Naive thymus-derived CD8-positive, alpha-beta T cell (primary cell): ENCODE measurements at regions of chr17 and their contacts with region 1.

Region 1: DNA sequence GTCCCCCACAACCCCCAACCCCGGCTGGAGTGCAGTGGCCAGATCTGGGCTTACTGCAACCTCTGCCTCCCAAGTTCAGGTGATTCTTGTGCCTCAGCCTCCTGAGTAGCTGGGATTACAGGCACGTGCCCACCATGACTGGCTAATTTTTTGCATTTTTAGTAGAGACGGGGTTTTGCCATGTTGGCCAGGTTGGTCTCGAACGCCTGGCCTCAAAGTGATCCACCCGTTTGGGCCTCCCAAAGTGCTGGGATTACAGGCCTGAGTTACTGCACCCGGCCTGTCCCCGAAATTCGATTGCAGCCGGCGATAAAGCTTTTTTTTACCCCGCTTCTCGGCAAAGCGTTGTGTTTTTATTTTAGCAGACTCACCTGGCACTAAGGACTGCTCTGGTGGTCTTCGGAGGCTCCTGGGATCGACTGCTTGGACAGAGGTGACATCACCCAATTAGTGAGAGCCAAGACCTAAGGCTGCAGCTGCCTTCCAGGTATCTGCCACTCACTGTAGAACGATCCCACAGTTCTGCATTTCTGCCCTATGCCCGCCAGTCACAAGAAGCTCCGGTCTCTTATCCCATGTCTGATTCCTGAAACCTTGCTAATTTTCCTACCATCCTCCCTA is 82.2 kb upstream of the ARL4D start:
- DNase-seq: peak in 3 of 10 donors; percentile 8 to 36 (median 31)
- ATAC-seq: no peak
- H3K4me3 Mint-ChIP-seq: peak overlapping the region in 4 of 10 donors; percentile 7 to 64 (median 51)
- H3K27ac Mint-ChIP-seq: peak overlapping the region in 8 of 10 donors; percentile 6 to 84 (median 58)
- H3K4me1 Mint-ChIP-seq: peaks cover 5 to 16% (median 13%) of the 10 kb centered on the region in 4 donors
- H3K27me3 Mint-ChIP-seq: no peaks in the 10 kb centered on the region

Region 2: GRCh38 chr17:43006639-43007551 is 309.7 kb before region 1 on chr17 and contains the start of gene IFI35:
- POLR2A ChIA-PET with region 1: interaction called, 15 read pairs
- DNase-seq: peak; percentile 66 to 91 (median 82)
- ATAC-seq: peak; percentile 99
- H3K4me3 Mint-ChIP-seq: peak within 1 kb of the TSS; percentile 98 to 100 (median 99)
- H3K27ac Mint-ChIP-seq: peak within 1 kb of the TSS; percentile 98 to 100 (median 99)
- H3K4me1 Mint-ChIP-seq: peaks cover 8 to 35% (median 27%) of the 10 kb centered on the region in 4 donors
- H3K27me3 Mint-ChIP-seq: no peaks in the 10 kb centered on the region
- polyA plus RNA-seq, gene IFI35: 44.8 to 49.8 (median 47.2) TPM

Region 3: DNA sequence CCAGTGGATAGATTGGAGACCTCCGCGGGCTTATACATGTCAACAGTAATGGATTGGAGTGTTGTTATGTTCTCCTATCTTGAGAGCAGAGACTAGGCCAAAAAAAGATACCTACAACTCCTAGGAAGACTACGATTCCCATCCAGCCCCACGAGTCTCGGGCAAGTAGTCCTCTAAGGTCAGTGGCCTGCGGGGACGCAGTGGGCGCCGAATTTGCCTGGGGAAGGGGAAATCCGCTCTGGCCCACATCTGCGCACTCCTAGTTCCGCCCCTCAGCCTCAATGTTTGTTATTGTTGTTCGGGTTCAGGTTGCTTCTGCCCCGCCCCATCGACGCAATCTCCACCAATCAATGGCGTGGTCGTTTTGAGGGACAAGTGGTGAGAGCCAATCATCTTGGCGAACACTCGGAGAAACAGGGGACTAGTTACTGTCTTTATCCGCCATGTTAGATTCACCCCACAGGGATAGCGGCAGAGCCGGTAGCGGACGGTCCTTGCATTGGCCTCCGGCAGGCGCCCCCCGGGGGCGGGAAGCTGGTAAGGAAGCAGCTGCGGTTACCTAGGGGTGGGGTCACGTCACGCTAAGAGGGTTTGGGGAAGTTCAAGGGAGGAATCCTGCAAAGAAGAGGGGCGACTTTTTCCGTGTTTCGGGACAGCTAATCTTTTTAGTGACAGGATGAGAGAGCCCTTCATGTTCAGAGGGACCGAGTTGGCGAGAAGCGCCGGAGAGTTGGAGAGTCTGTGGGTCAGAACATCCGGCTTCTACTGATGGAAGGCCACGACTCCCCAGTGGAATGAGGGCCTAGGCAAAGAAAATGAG is 145.7 kb before region 1 on chr17 and contains the start of gene NBR1:
- POLR2A ChIA-PET with region 1: interaction called, 43 read pairs
- DNase-seq: peak; percentile 76 to 99 (median 96)
- ATAC-seq: peak; percentile 78 to 83
- H3K4me3 Mint-ChIP-seq: no peak within 1 kb of the TSS
- H3K27ac Mint-ChIP-seq: no peak within 1 kb of the TSS
- H3K4me1 Mint-ChIP-seq: peaks cover 14 to 37% (median 28%) of the 10 kb centered on the region in 4 donors
- H3K27me3 Mint-ChIP-seq: no peaks in the 10 kb centered on the region
- polyA plus RNA-seq, gene NBR1: 63.3 to 73.2 (median 68.1) TPM

Region 4: DNA sequence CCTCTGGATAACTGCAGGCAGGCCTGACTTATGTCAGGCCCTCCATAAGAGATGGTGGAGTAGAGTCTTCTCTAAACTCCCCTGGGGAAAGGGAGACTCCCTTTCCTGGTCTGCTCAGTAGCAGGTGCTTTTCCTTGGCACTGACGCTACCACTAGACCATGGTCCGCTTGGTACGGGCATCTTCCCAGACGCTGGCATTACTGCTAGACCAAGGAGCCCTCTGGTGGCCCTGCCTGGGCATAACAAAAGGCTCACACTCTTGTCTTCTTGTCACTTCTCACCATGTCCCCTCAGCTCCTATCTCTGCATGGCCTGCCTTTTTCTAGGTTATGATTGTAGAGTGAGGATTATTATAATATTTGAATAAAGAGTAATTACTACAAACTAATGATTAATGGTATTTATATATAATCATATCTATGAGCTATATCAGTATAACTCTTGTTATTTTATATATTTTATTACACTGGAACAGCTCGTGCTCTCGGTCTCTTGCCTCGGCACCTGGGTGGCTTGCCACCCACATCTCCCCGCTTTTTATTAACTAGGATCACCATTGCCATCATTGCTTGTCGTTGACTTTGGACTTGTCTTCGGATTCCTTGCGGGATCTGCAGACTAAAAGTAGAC is 22.4 kb after region 1 on chr17:
- POLR2A ChIA-PET with region 1: interaction called, 29 read pairs
- DNase-seq: peak; percentile 33 to 83 (median 52)
- ATAC-seq: no peak
- H3K4me3 Mint-ChIP-seq: no peak overlapping the region
- H3K27ac Mint-ChIP-seq: peak overlapping the region in 2 of 10 donors; percentile 18 to 59
- H3K4me1 Mint-ChIP-seq: peaks cover 7 to 15% (median 12%) of the 10 kb centered on the region in 4 donors
- H3K27me3 Mint-ChIP-seq: no peaks in the 10 kb centered on the region

Region 5: DNA sequence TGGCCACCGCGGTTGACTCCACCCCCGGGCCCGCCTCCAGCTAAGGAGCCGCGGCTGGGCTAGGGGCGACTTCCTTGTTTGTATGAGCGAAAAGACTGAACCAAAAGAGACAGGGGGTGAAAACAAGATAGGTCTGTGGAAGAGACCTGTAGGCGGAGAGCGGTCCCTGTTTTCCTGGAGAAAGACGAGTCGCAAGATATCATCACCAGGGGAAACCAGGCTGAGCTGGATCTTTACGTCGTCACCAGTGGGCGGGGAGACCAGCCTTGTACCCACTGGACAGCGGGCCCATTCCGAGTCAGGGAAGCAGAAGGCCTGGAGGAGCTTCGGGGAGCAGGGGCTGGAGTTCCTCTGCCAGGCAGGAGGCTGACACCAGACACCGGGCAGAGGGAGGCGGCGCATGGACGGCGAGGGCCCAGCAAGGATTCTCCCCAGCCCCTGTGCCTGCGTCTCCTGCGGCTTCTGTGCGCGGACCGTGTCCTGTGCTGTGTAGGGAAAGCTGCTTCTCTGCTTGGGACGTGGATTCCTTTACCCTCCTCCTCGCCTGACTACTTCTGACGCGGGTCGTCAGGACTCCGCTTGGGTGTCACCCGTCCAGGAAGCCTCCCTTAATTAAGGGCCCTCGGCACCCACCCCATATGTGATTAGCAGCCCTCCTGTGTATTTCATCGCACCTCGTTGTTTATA is 71.9 kb after region 1 on chr17:
- POLR2A ChIA-PET with region 1: interaction called, 18 read pairs
- DNase-seq: peak; percentile 88 to 95 (median 92)
- ATAC-seq: peak; percentile 70 to 72
- H3K4me3 Mint-ChIP-seq: peak overlapping the region; percentile 93 to 97 (median 95)
- H3K27ac Mint-ChIP-seq: peak overlapping the region; percentile 95 to 100 (median 99)
- H3K4me1 Mint-ChIP-seq: peaks cover 15 to 38% (median 37%) of the 10 kb centered on the region in 4 donors
- H3K27me3 Mint-ChIP-seq: no peaks in the 10 kb centered on the region